H1 (cell line): ENCODE measurements at regions of chr18 and their contacts with region 1.

Region 1: GRCh38 chr18:31722369-31722957 is 38.1 kb upstream of the B4GALT6 start:
- DNase-seq: peak; percentile 60 to 95
- H3K4me3 ChIP-seq: no peak overlapping the region
- H3K27ac ChIP-seq: no peak overlapping the region
- H3K4me1 ChIP-seq: no peaks in the 10 kb centered on the region
- H3K27me3 ChIP-seq: no peaks in the 10 kb centered on the region
- CTCF ChIP-seq: peak; percentile 67 to 92 (median 84)
- EP300 ChIP-seq: no peak
- POLR2A ChIP-seq: no peak
- RAD21 ChIP-seq: peak; percentile 77 to 86

Region 2: GRCh38 chr18:31478688-31479087 is 243.8 kb before region 1 on chr18:
- CTCF ChIA-PET with region 1: no interaction called
- POLR2A ChIA-PET with region 1: no interaction called
- DNase-seq: no peak
- H3K4me3 ChIP-seq: no peak overlapping the region
- H3K27ac ChIP-seq: no peak overlapping the region
- H3K4me1 ChIP-seq: no peaks in the 10 kb centered on the region
- H3K27me3 ChIP-seq: no peaks in the 10 kb centered on the region
- CTCF ChIP-seq: no peak
- EP300 ChIP-seq: no peak
- POLR2A ChIP-seq: no peak
- RAD21 ChIP-seq: no peak

Region 3: GRCh38 chr18:31610286-31611205 is 111.9 kb before region 1 on chr18:
- CTCF ChIA-PET with region 1: interaction called, 14 read pairs
- POLR2A ChIA-PET with region 1: no interaction called
- DNase-seq: peak; percentile 57 to 59
- H3K4me3 ChIP-seq: no peak overlapping the region
- H3K27ac ChIP-seq: no peak overlapping the region
- H3K4me1 ChIP-seq: peaks cover 0 to 6% (median 3%) of the 10 kb centered on the region in 4 experiments; a peak in 4 of 7 replicates
- H3K27me3 ChIP-seq: no peaks in the 10 kb centered on the region
- CTCF ChIP-seq: peak; percentile 51 to 62 (median 57)
- EP300 ChIP-seq: no peak
- POLR2A ChIP-seq: no peak
- RAD21 ChIP-seq: peak; percentile 53 to 61

Region 4: DNA sequence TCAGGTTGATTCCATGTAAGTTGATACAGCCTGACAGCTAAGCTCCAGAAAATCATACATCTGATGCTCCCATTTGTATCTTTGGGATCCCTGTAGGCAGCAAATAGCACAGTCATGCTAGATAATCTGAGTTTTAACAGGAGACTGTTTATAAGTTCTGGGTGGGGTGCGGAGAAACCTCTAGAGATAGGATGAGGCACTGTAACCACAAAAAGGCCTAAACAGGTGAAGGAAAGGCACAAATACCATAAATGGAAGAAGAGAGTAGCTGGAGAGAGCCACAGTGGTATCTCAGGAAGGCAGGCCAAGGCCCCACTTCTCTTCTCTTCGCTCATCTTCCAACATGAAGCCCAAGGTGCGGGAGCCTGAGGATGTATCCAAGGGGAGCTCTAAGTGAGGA is 20.0 kb before region 1 on chr18:
- CTCF ChIA-PET with region 1: interaction called, 17 read pairs
- POLR2A ChIA-PET with region 1: no interaction called
- DNase-seq: no peak
- H3K4me3 ChIP-seq: no peak overlapping the region
- H3K27ac ChIP-seq: no peak overlapping the region
- H3K4me1 ChIP-seq: peaks cover 0 to 5% (median 1%) of the 10 kb centered on the region in 4 experiments; a peak in 1 of 7 replicates
- H3K27me3 ChIP-seq: no peaks in the 10 kb centered on the region
- CTCF ChIP-seq: no peak
- EP300 ChIP-seq: no peak
- POLR2A ChIP-seq: no peak
- RAD21 ChIP-seq: no peak

Region 5: GRCh38 chr18:31741097-31741735 is 18.8 kb after region 1 on chr18:
- CTCF ChIA-PET with region 1: interaction called, 88 read pairs
- POLR2A ChIA-PET with region 1: no interaction called
- DNase-seq: peak in 1 of 2 experiments; percentile 72
- H3K4me3 ChIP-seq: no peak overlapping the region
- H3K27ac ChIP-seq: no peak overlapping the region
- H3K4me1 ChIP-seq: no peaks in the 10 kb centered on the region; a peak in 3 of 7 replicates
- H3K27me3 ChIP-seq: no peaks in the 10 kb centered on the region
- CTCF ChIP-seq: peak in 2 of 3 experiments; percentile 35 to 70; a peak in 2 of 4 replicates
- EP300 ChIP-seq: no peak
- POLR2A ChIP-seq: no peak
- RAD21 ChIP-seq: peak; percentile 61 to 69

Region 6: GRCh38 chr18:31876707-31877106 is 154.2 kb after region 1 on chr18:
- CTCF ChIA-PET with region 1: no interaction called
- POLR2A ChIA-PET with region 1: no interaction called
- DNase-seq: no peak
- H3K4me3 ChIP-seq: no peak overlapping the region
- H3K27ac ChIP-seq: no peak overlapping the region; the same call in 1 of the 2 replicates
- H3K4me1 ChIP-seq: no peaks in the 10 kb centered on the region
- H3K27me3 ChIP-seq: no peaks in the 10 kb centered on the region
- CTCF ChIP-seq: no peak
- EP300 ChIP-seq: no peak
- POLR2A ChIP-seq: no peak
- RAD21 ChIP-seq: no peak

Region 7: GRCh38 chr18:31950583-31950982 is 228.1 kb after region 1 on chr18:
- CTCF ChIA-PET with region 1: no interaction called
- POLR2A ChIA-PET with region 1: no interaction called
- DNase-seq: no peak
- H3K4me3 ChIP-seq: no peak overlapping the region
- H3K27ac ChIP-seq: no peak overlapping the region
- H3K4me1 ChIP-seq: peaks cover 0 to 3% (median 0%) of the 10 kb centered on the region in 4 experiments; a peak in 3 of 7 replicates
- H3K27me3 ChIP-seq: no peaks in the 10 kb centered on the region
- CTCF ChIP-seq: no peak
- EP300 ChIP-seq: no peak
- POLR2A ChIP-seq: no peak
- RAD21 ChIP-seq: no peak